A549 (cell line): ENCODE measurements at regions of chr9 and their contacts with region 1.

Region 1: GRCh38 chr9:122125158-122125508 is 32.0 kb upstream of the TTLL11 start:
- DNase-seq: peak; percentile 71 to 87
- ATAC-seq: peak; percentile 83 to 91
- H3K4me3 ChIP-seq: no peak overlapping the region
- H3K27ac ChIP-seq: peak overlapping the region; percentile 7 to 38; a peak in 2 of 6 replicates
- H3K4me1 ChIP-seq: peaks cover 10% of the 10 kb centered on the region; the same call in 2 of the 3 replicates
- CTCF ChIP-seq: peak; percentile 95
- EP300 ChIP-seq: no peak
- POLR2A ChIP-seq: no peak
- RAD21 ChIP-seq: peak; percentile 97 to 98

Region 2: GRCh38 chr9:121972501-121972981 is 152.6 kb before region 1 on chr9:
- CTCF ChIA-PET with region 1: no interaction called
- POLR2A ChIA-PET with region 1: no interaction called
- DNase-seq: peak in 1 of 2 experiments; percentile 47
- ATAC-seq: peak; percentile 88 to 94
- H3K4me3 ChIP-seq: no peak overlapping the region
- H3K27ac ChIP-seq: peak overlapping the region in 1 of 2 experiments; percentile 50; a peak in 2 of 6 replicates
- H3K4me1 ChIP-seq: peaks cover 45% of the 10 kb centered on the region
- CTCF ChIP-seq: no peak
- EP300 ChIP-seq: no peak
- POLR2A ChIP-seq: no peak
- RAD21 ChIP-seq: no peak

Region 3: DNA sequence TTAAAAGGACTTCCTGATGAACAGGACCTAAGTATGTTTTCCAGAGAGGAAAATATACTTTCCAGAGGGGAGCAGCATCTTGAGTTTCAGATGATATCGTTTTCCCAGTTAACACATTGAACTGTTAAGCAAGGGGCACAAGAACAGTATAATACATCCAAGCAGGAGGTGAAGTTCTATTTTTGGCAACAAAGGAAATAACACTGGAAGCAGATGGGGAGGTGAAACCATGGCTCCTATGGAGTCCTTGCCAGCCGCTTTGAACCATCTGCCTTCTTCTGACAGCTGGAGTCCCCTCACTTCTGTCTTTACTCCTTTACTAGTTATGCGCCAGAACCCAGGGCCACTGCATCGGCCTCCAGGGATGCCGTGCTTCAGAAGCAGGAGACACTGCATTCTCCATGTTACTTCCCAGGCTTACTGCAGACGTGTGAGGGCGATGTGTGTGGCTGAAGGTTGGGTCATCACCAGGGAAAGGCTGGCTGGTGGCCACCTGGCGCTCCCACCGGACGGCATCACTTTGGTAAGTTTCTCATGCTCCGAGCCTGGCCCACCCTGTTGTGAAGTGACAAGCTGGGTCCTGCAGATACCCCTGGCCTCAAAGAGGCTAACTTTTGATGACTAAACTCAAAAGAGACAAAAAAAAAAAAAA is 109.8 kb before region 1 on chr9:
- CTCF ChIA-PET with region 1: no interaction called
- POLR2A ChIA-PET with region 1: no interaction called
- DNase-seq: no peak
- ATAC-seq: no peak
- H3K4me3 ChIP-seq: no peak overlapping the region
- H3K27ac ChIP-seq: no peak overlapping the region
- H3K4me1 ChIP-seq: no peaks in the 10 kb centered on the region
- CTCF ChIP-seq: no peak
- EP300 ChIP-seq: no peak
- POLR2A ChIP-seq: no peak
- RAD21 ChIP-seq: no peak

Region 4: DNA sequence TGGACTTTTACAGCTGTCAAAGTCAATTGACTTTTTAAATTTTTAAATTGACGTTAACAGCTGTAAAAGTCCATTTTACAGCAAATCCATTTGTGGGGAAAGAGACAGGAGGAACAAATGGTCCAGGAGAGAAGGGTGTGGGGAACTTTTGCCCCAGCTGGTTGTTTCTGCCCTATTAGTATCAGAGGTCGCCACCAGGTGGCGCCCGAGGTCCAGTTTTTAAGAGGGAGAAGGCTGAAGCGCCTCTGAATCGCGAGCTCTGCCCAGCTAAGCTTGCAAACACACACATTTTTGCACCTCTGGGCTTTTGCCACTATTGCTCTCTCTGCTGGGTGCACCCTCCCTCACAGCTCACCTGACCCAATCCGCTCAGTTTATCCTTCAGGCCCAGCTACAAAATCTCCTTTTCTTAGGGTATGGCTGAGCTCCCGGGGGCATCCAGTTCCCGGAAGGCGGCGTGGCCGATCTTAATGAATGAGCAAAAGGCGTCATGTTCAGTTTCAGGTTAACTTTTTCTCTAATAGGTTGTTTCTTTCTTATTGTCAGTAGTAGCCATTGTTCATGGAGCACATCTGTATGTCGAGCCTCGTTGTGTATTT is 25.8 kb before region 1 on chr9:
- CTCF ChIA-PET with region 1: interaction called, 385 read pairs
- POLR2A ChIA-PET with region 1: interaction called, 3 read pairs
- DNase-seq: peak; percentile 69 to 71
- ATAC-seq: peak; percentile 81 to 92
- H3K4me3 ChIP-seq: no peak overlapping the region
- H3K27ac ChIP-seq: no peak overlapping the region
- H3K4me1 ChIP-seq: no peaks in the 10 kb centered on the region
- CTCF ChIP-seq: peak; percentile 89
- EP300 ChIP-seq: no peak
- POLR2A ChIP-seq: no peak
- RAD21 ChIP-seq: peak; percentile 82 to 84

Region 5: GRCh38 chr9:122144836-122145591 is 19.9 kb after region 1 on chr9:
- CTCF ChIA-PET with region 1: interaction called, 97 read pairs
- POLR2A ChIA-PET with region 1: no interaction called
- DNase-seq: no peak
- ATAC-seq: peak; percentile 77 to 79
- H3K4me3 ChIP-seq: no peak overlapping the region
- H3K27ac ChIP-seq: no peak overlapping the region
- H3K4me1 ChIP-seq: no peaks in the 10 kb centered on the region
- CTCF ChIP-seq: peak; percentile 43
- EP300 ChIP-seq: no peak
- POLR2A ChIP-seq: no peak
- RAD21 ChIP-seq: no peak

Region 6: DNA sequence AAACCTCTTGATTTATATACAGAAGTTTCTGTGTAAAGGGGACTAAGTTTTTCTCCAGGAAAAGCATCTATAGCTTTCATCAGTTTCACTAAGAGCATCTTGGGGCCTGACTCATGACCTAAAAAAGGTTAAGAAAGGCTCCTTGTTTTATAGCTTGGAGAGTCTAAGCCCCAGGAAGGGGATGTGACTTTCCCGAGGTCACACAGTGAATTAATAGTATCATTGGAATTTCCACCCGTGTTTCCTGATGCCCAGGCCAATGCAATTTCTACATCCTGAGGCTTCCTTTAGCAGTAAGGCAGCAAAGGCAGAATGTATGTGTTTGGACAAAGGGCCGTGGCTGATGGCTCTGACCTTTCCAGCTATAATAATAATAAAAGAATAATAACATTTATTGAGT is 43.2 kb after region 1 on chr9:
- CTCF ChIA-PET with region 1: interaction called, 10 read pairs
- POLR2A ChIA-PET with region 1: no interaction called
- DNase-seq: no peak
- ATAC-seq: no peak
- H3K4me3 ChIP-seq: no peak overlapping the region
- H3K27ac ChIP-seq: no peak overlapping the region
- H3K4me1 ChIP-seq: no peaks in the 10 kb centered on the region
- CTCF ChIP-seq: no peak
- EP300 ChIP-seq: no peak
- POLR2A ChIP-seq: no peak
- RAD21 ChIP-seq: no peak

Region 7: DNA sequence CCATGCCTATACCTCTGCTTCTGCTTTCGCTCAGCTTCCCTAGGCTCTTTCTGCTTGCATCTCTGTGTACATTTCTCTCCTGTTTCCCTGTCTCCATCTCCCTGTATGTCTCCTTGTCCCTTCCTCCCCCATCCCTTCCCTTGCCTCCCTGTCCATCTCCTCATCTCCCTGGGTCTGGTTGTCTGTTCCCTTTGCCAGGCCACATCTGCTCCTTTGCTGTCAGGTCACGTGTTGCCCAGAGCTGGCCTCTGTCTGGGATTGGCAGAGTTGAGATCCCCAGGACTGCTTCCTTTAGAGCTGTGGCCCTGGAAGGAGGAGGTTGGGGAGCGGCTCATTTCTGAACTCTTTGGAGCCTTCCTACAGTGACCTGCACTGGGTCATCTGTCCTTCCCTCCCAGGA is 213.9 kb after region 1 on chr9:
- CTCF ChIA-PET with region 1: interaction called, 541 read pairs
- POLR2A ChIA-PET with region 1: no interaction called
- DNase-seq: no peak
- ATAC-seq: peak in 1 of 2 experiments; percentile 10; a peak in 2 of 6 replicates
- H3K4me3 ChIP-seq: no peak overlapping the region
- H3K27ac ChIP-seq: no peak overlapping the region
- H3K4me1 ChIP-seq: no peaks in the 10 kb centered on the region
- CTCF ChIP-seq: no peak
- EP300 ChIP-seq: no peak
- POLR2A ChIP-seq: no peak
- RAD21 ChIP-seq: no peak

Region 8: DNA sequence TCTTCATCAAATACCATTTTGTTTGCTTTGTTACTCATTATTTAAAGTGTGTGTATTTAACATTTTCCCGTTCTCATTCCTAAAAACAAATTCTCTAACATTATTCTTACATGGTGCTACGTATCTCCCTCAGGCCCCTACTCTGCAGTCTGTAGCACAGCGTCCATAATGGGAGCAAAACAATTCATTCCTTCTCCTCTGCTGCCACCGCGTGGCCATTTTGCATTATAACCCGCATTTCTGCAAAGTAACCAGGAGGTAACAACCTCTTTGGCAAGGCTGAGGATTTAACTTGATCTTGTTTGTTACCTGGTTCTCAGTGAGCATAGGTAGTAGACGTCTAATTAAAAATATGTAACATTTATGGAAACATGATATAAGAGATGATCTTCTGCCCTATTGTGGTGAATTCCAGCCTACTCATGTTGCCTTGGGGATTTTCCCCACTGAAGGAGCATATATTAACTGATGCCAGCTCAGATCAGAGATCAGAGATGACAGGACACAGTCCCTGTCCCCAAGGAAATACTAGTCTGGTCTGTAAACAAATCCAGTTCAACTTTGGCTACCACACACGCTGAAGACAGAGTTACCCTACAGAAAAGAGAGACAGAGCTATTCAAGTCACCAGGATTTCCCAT is 685.3 kb after region 1 on chr9:
- CTCF ChIA-PET with region 1: interaction called, 28 read pairs
- POLR2A ChIA-PET with region 1: no interaction called
- DNase-seq: peak; percentile 78 to 82
- ATAC-seq: peak; percentile 91 to 97
- H3K4me3 ChIP-seq: no peak overlapping the region
- H3K27ac ChIP-seq: no peak overlapping the region
- H3K4me1 ChIP-seq: 0 out of 3 replicates have a peak, but pooled peaks cover 4% of the 10 kb centered on the region
- CTCF ChIP-seq: peak; percentile 91
- EP300 ChIP-seq: no peak
- POLR2A ChIP-seq: no peak
- RAD21 ChIP-seq: peak; percentile 96 to 98